ENCODE measurements at regions of chr6 and their contacts with region 1.

Region 1: GRCh38 chr6:32796848-32797776 is 19.7 kb downstream of the HLA-DOB start:
- DNase-seq: peak; percentile 65
- H3K4me3 ChIP-seq: peak overlapping the region in 1 of 3 experiments; percentile 19
- H3K27ac ChIP-seq: no peak overlapping the region
- H3K4me1 ChIP-seq: no peaks in the 10 kb centered on the region
- H3K27me3 ChIP-seq: peaks cover 40 to 67% of the 10 kb centered on the region in 2 experiments
- CTCF ChIP-seq: peak; percentile 77 to 82
- POLR2A ChIP-seq: no peak

Region 2: GRCh38 chr6:32047850-32048766 is 749.0 kb before region 1 on chr6:
- CTCF ChIA-PET with region 1: no interaction called
- POLR2A ChIA-PET with region 1: no interaction called
- dilution Hi-C with region 1: no loop called
- intact Hi-C with region 1: loop called (anchors 10 kb)
- DNase-seq: peak; percentile 39
- H3K4me3 ChIP-seq: no peak overlapping the region
- H3K27ac ChIP-seq: no peak overlapping the region
- H3K4me1 ChIP-seq: peaks cover 10% of the 10 kb centered on the region
- H3K27me3 ChIP-seq: peaks cover 0 to 3% of the 10 kb centered on the region in 2 experiments
- CTCF ChIP-seq: peak; percentile 64 to 91
- POLR2A ChIP-seq: no peak

Region 3: GRCh38 chr6:32432050-32432450 is 365.1 kb before region 1 on chr6:
- CTCF ChIA-PET with region 1: interaction called, 4 read pairs
- POLR2A ChIA-PET with region 1: no interaction called
- dilution Hi-C with region 1: no loop called
- intact Hi-C with region 1: loop called (anchors 5 kb)
- DNase-seq: peak; percentile 51
- H3K4me3 ChIP-seq: no peak overlapping the region
- H3K27ac ChIP-seq: no peak overlapping the region
- H3K4me1 ChIP-seq: no peaks in the 10 kb centered on the region
- H3K27me3 ChIP-seq: peaks cover 20 to 27% of the 10 kb centered on the region in 2 experiments
- CTCF ChIP-seq: peak in 1 of 2 donors; percentile 12
- POLR2A ChIP-seq: no peak

Region 4: GRCh38 chr6:32622545-32623401 is 174.3 kb before region 1 on chr6:
- CTCF ChIA-PET with region 1: interaction called, 3 read pairs
- POLR2A ChIA-PET with region 1: no interaction called
- dilution Hi-C with region 1: no loop called
- intact Hi-C with region 1: loop called (anchors 1 kb)
- DNase-seq: no peak
- H3K4me3 ChIP-seq: no peak overlapping the region
- H3K27ac ChIP-seq: no peak overlapping the region
- H3K4me1 ChIP-seq: no peaks in the 10 kb centered on the region
- H3K27me3 ChIP-seq: no peaks in the 10 kb centered on the region
- CTCF ChIP-seq: peak in 1 of 2 donors; percentile 14
- POLR2A ChIP-seq: no peak

Region 5: DNA sequence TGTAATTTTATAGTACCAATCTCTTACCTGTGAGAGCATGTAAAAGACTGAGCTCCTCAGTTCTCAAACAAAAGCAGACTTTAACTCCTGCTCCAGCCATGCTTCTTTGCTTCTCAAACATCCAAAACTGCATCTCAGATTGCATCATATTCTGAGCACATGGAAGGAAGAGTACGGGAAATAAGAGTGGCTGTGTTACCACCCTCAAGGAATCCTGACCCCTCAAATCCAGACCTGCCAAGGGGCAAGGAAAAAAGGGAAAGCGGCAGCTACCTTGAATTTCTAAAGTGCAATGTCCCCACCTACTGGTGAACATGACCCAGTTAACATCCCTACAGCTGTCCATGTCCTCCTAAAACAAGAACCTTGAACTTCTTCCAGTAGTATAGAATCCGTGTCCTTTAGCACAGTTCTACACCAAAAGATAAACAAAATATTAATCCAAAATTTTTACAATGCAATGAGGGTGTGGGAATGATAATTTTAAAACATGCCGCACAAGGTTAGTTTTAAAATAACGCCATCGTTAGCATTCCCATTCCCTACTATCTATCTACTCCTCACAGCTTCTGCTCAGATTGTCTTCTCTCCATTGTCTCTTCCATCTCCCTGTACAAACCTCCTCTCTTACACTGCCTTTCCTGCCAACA is 96.6 kb before region 1 on chr6:
- CTCF ChIA-PET with region 1: no interaction called
- POLR2A ChIA-PET with region 1: no interaction called
- dilution Hi-C with region 1: no loop called
- intact Hi-C with region 1: loop called (anchors 5 kb)
- DNase-seq: peak; percentile 67
- H3K4me3 ChIP-seq: no peak overlapping the region
- H3K27ac ChIP-seq: no peak overlapping the region
- H3K4me1 ChIP-seq: peaks cover 6% of the 10 kb centered on the region
- H3K27me3 ChIP-seq: peaks cover 15 to 40% of the 10 kb centered on the region in 2 experiments
- CTCF ChIP-seq: peak; percentile 41 to 64
- POLR2A ChIP-seq: no peak

Region 6: DNA sequence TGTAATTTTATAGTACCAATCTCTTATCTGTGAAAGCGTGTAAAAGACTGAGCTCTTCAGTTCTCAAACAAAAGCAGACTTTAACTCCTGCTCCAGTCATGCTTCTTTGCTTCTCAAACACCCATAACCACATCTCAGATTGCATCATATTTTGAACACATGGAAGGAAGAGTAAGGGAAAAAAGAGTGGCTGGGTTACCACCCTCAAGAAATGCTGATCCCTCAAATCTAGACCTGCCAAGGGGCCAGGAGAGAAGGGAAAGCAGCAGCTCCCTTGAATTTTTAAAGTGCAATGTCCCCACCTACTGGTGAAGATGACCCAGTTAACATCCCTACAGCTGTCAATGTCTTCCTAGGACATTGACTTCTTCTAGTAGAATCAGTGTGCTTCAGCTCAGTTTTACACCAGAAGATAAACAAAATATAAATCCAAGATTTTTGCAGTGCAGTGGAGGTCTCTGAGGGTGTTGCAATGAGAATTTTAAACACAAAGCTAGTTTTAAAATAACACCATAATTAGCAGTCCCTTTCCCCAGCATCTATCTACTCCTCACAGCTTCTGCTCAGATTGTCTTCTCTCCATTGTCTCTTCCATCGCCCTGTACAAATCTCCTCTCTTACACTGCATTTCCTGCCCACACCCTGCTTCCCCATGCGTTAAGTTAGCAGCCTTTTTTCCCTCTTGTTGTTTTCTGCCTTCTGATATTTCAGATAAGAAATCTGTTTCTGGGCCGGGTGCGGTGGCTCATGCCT is 11.2 kb before region 1 on chr6:
- CTCF ChIA-PET with region 1: interaction called, 17 read pairs
- POLR2A ChIA-PET with region 1: no interaction called
- dilution Hi-C with region 1: no loop called
- intact Hi-C with region 1: no loop called
- DNase-seq: peak; percentile 58
- H3K4me3 ChIP-seq: no peak overlapping the region
- H3K27ac ChIP-seq: no peak overlapping the region
- H3K4me1 ChIP-seq: no peaks in the 10 kb centered on the region
- H3K27me3 ChIP-seq: peaks cover 8 to 50% of the 10 kb centered on the region in 2 experiments
- CTCF ChIP-seq: peak; percentile 49 to 51
- POLR2A ChIP-seq: no peak

Region 7: DNA sequence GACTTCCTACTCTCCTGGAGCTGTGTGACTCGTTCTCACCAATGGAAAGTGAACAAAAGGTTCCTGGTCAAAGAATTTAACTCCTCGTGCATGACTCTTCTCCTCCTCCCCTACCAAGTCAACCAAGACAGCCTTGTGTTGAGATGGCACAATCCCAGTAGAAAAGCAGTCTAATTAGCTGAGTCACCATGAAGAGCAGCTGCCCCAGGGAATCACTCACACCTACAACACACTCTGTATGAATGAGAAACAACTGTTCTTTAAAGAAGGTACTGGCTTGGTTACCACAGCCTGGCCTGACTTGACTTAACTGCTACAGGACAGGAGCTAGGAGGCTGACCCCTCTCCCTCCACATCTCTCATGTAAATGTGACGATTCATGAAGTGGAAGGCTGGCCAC is 22.6 kb after region 1 on chr6:
- CTCF ChIA-PET with region 1: no interaction called
- POLR2A ChIA-PET with region 1: no interaction called
- dilution Hi-C with region 1: no loop called
- intact Hi-C with region 1: no loop called
- DNase-seq: no peak
- H3K4me3 ChIP-seq: no peak overlapping the region
- H3K27ac ChIP-seq: no peak overlapping the region
- H3K4me1 ChIP-seq: no peaks in the 10 kb centered on the region
- H3K27me3 ChIP-seq: peaks cover 0 to 4% of the 10 kb centered on the region in 2 experiments
- CTCF ChIP-seq: no peak
- POLR2A ChIP-seq: no peak